ENCODE measurements at regions of chr4 and their contacts with region 1.

Region 1: GRCh38 chr4:120156120-120156718 is 89.6 kb upstream of the MAD2L1 start:
- DNase-seq: peak; percentile 7
- ATAC-seq: peak; percentile 65
- H3K4me3 ChIP-seq: no peak overlapping the region
- H3K27ac ChIP-seq: no peak overlapping the region
- H3K4me1 ChIP-seq: no peaks in the 10 kb centered on the region
- H3K27me3 ChIP-seq: no peaks in the 10 kb centered on the region
- CTCF ChIP-seq: peak; percentile 39 to 61 (median 52); a peak in 5 of 6 replicates
- EP300 ChIP-seq: no peak
- POLR2A ChIP-seq: no peak
- RAD21 ChIP-seq: peak; percentile 82

Region 2: DNA sequence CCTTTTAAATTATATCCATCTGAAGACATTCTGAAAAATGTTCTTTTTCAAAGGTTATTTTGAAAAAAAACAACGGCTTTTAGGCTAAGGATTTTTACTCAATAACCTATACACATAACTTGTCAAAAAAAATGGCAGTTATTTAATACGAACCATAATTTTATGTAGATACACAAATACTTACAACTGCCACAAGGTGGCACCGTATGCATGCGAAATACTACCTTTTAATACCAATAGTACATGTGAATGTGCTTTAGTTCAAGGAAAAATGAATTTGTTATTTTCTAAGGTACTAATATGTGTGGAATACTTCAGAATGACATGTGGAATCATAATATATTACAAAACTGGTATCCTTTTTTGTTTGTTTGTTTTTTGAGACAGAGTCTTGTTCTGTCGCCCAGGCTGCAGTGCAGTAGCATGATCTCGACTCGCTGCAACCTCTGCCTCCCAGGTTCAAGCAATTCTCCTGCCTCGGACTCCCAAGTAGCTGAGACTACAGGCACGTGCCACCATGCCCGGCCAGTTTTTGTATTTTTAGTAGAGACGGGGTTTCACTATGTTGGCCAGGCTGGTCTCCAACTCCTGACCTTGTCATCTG is 84.9 kb before region 1 on chr4:
- CTCF ChIA-PET with region 1: interaction called, 4 read pairs
- POLR2A ChIA-PET with region 1: no interaction called
- RAD21 ChIA-PET with region 1: interaction called, 10 read pairs
- SMC1A ChIA-PET with region 1: interaction called, 3 read pairs
- in situ Hi-C with region 1: no loop called
- intact Hi-C with region 1: loop called (anchors 2 kb)
- DNase-seq: no peak
- ATAC-seq: no peak
- H3K4me3 ChIP-seq: no peak overlapping the region
- H3K27ac ChIP-seq: no peak overlapping the region
- H3K4me1 ChIP-seq: peaks cover 5% of the 10 kb centered on the region
- H3K27me3 ChIP-seq: no peaks in the 10 kb centered on the region
- CTCF ChIP-seq: peak in 2 of 3 experiments; percentile 48 to 58; a peak in 4 of 6 replicates
- EP300 ChIP-seq: no peak
- POLR2A ChIP-seq: no peak
- RAD21 ChIP-seq: peak; percentile 63

Region 3: GRCh38 chr4:120809518-120809917 is 653.3 kb after region 1 on chr4:
- CTCF ChIA-PET with region 1: interaction called, 5 read pairs
- POLR2A ChIA-PET with region 1: no interaction called
- RAD21 ChIA-PET with region 1: no interaction called
- SMC1A ChIA-PET with region 1: no interaction called
- in situ Hi-C with region 1: no loop called
- intact Hi-C with region 1: loop called (anchors 5 kb)
- DNase-seq: no peak
- ATAC-seq: no peak
- H3K4me3 ChIP-seq: no peak overlapping the region
- H3K27ac ChIP-seq: no peak overlapping the region
- H3K4me1 ChIP-seq: no peaks in the 10 kb centered on the region
- H3K27me3 ChIP-seq: no peaks in the 10 kb centered on the region; a peak in 1 of 4 replicates
- CTCF ChIP-seq: peak in 2 of 3 experiments; percentile 42 to 56; a peak in 5 of 6 replicates
- EP300 ChIP-seq: no peak
- POLR2A ChIP-seq: no peak
- RAD21 ChIP-seq: no peak

Region 4: GRCh38 chr4:120977435-120977997 is 821.3 kb after region 1 on chr4:
- CTCF ChIA-PET with region 1: interaction called, 7 read pairs
- POLR2A ChIA-PET with region 1: no interaction called
- RAD21 ChIA-PET with region 1: interaction called, 4 read pairs
- SMC1A ChIA-PET with region 1: no interaction called
- in situ Hi-C with region 1: no loop called
- intact Hi-C with region 1: loop called (anchors 10 kb)
- DNase-seq: no peak
- ATAC-seq: peak; percentile 90
- H3K4me3 ChIP-seq: no peak overlapping the region
- H3K27ac ChIP-seq: no peak overlapping the region
- H3K4me1 ChIP-seq: no peaks in the 10 kb centered on the region
- H3K27me3 ChIP-seq: no peaks in the 10 kb centered on the region
- CTCF ChIP-seq: peak; percentile 54 to 60 (median 58)
- EP300 ChIP-seq: no peak
- POLR2A ChIP-seq: no peak
- RAD21 ChIP-seq: peak; percentile 61

Region 5: GRCh38 chr4:121096629-121097028 is 940.4 kb after region 1 on chr4:
- CTCF ChIA-PET with region 1: interaction called, 8 read pairs
- POLR2A ChIA-PET with region 1: no interaction called
- RAD21 ChIA-PET with region 1: interaction called, 4 read pairs
- SMC1A ChIA-PET with region 1: interaction called, 3 read pairs
- in situ Hi-C with region 1: loop called (anchors 10 kb)
- intact Hi-C with region 1: loop called (anchors 5 kb)
- DNase-seq: no peak
- ATAC-seq: no peak
- H3K4me3 ChIP-seq: no peak overlapping the region
- H3K27ac ChIP-seq: no peak overlapping the region
- H3K4me1 ChIP-seq: no peaks in the 10 kb centered on the region
- H3K27me3 ChIP-seq: no peaks in the 10 kb centered on the region
- CTCF ChIP-seq: peak; percentile 1 to 41 (median 36); a peak in 3 of 6 replicates
- EP300 ChIP-seq: no peak
- POLR2A ChIP-seq: no peak
- RAD21 ChIP-seq: peak; percentile 55

Region 6: DNA sequence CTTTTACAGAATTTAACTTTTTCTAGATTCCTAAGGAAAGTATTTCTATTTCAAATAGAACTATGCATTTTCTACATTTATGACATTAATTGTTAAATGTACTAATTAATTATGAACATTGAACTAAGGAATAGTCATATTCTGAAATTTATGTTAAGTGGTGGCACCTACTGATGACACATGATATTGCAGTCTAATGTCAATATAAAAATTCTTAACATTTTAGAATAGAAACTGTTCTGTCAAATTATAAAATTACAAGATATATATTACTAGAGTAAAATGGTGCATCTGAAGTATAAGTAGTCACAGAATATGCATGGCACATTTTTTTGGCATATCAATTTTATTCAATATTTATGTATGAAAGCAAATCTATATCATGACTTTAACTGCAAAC is 956.3 kb after region 1 on chr4:
- CTCF ChIA-PET with region 1: interaction called, 7 read pairs
- POLR2A ChIA-PET with region 1: no interaction called
- RAD21 ChIA-PET with region 1: no interaction called
- SMC1A ChIA-PET with region 1: no interaction called
- in situ Hi-C with region 1: no loop called
- intact Hi-C with region 1: loop called (anchors 5 kb)
- DNase-seq: no peak
- ATAC-seq: no peak
- H3K4me3 ChIP-seq: no peak overlapping the region
- H3K27ac ChIP-seq: no peak overlapping the region
- H3K4me1 ChIP-seq: peaks cover 3% of the 10 kb centered on the region; the same call in 1 of the 2 replicates
- H3K27me3 ChIP-seq: peaks cover 0 to 2% of the 10 kb centered on the region in 2 experiments; a peak in 2 of 4 replicates
- CTCF ChIP-seq: peak in 1 of 3 experiments; percentile 25; a peak in 2 of 6 replicates
- EP300 ChIP-seq: no peak
- POLR2A ChIP-seq: no peak
- RAD21 ChIP-seq: no peak